Activated naive CD8-positive, alpha-beta T cell treated with anti-CD3 and anti-CD28 coated beads, Interleukin-2, amount 10 ng/mL, durations not matched to agents 7 days and 5 days (primary cell): ENCODE measurements at regions of chr17 and their contacts with region 1.

Region 1: GRCh38 chr17:416293-417206 is 63.9 kb upstream of the RPH3AL start:
- DNase-seq: peak; percentile 71
- ATAC-seq: peak; percentile 79
- H3K4me3 Mint-ChIP-seq: peak overlapping the region; percentile 91
- H3K27ac Mint-ChIP-seq: peak overlapping the region; percentile 99
- H3K4me1 Mint-ChIP-seq: peaks cover 72% of the 10 kb centered on the region
- H3K27me3 Mint-ChIP-seq: no peaks in the 10 kb centered on the region

Region 2: DNA sequence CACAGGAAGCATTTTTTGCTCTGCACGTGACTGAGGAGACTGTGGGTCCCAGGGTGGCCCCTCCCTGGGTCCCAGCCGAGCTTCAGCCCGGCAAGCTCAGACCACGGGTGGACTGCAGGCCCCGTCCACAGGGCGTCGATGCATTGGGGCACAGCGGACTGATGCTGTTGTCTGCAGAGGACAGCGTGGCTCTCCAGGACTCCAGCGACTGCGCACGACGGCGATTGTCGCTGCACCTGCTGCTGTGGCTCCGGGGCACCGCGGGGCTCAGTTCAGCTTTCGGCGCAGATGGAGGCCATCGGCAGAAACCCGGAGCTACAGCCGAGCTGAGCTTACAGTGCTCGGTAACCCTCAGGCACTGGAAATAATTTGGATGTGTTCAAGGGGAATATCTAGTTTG is 24.6 kb after region 1 on chr17:
- POLR2A ChIA-PET with region 1: interaction called, 11 read pairs
- DNase-seq: no peak
- ATAC-seq: no peak
- H3K4me3 Mint-ChIP-seq: no peak overlapping the region
- H3K27ac Mint-ChIP-seq: no peak overlapping the region
- H3K4me1 Mint-ChIP-seq: peaks cover 3% of the 10 kb centered on the region
- H3K27me3 Mint-ChIP-seq: no peaks in the 10 kb centered on the region

Region 3: GRCh38 chr17:491086-492021 is 74.8 kb after region 1 on chr17:
- POLR2A ChIA-PET with region 1: interaction called, 41 read pairs
- DNase-seq: peak; percentile 74
- ATAC-seq: no peak
- H3K4me3 Mint-ChIP-seq: peak overlapping the region; percentile 52
- H3K27ac Mint-ChIP-seq: peak overlapping the region; percentile 51
- H3K4me1 Mint-ChIP-seq: peaks cover 11% of the 10 kb centered on the region
- H3K27me3 Mint-ChIP-seq: peaks cover 10% of the 10 kb centered on the region